Activated CD4-positive, alpha-beta T cell treated with anti-CD3 and anti-CD28 coated beads for 36 hours (primary cell): ENCODE measurements at regions of chr9 and their contacts with region 1.

Region 1: DNA sequence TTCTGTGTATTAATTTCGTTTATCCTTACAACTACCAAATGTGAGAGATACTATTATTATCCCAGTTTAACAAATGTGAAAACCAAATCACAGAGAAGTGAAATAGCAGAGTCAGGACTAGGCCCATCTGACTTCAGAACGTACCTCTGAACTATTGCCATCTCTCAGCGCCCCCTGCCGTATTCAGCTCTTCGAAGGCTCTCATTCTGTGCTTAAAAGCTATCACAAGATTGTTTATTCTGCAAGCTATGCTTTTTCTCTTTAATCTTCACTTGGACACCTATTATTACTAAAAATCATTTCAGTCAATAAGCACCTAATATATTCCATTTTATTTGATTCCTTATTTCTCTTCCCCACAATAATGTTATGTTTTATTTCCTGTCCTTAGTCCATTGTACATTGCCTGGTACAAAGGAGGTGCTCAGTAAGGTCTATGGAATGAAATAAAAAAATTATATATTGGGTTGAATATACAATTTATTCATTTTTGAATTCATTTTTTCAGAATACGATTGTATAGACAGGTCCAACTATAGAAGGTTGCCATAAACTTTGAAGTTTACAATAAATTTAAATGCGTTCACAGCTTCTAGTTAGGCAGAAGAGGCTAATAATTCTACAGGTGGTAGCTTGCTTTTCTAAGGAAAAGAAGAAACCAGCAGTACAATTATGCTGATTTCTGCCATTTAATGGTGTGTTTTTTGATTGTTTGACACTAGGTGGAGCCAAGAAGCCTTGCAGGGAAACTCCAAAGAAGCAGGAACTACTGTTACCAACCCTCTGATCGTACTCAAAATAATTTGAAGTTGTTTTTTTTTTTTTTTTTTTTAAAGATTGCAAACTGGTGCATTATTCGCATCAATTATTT is 202.2 kb upstream of the DMRTA1 start:
- DNase-seq: peak; percentile 53
- ATAC-seq: peak; percentile 36
- H3K4me3 Mint-ChIP-seq: no peak overlapping the region
- H3K27ac Mint-ChIP-seq: no peak overlapping the region
- H3K4me1 Mint-ChIP-seq: peaks cover 22% of the 10 kb centered on the region
- H3K27me3 Mint-ChIP-seq: peaks cover 28% of the 10 kb centered on the region

Region 2: GRCh38 chr9:21965401-21965951 is 278.9 kb before region 1 on chr9:
- CTCF ChIA-PET with region 1: no interaction called
- POLR2A ChIA-PET with region 1: no interaction called
- intact Hi-C with region 1: loop called in 1 of 2 experiments (anchors 5 kb)
- DNase-seq: peak; percentile 75
- ATAC-seq: peak; percentile 84
- H3K4me3 Mint-ChIP-seq: peak overlapping the region; percentile 53
- H3K27ac Mint-ChIP-seq: peak overlapping the region; percentile 5
- H3K4me1 Mint-ChIP-seq: peaks cover 24% of the 10 kb centered on the region
- H3K27me3 Mint-ChIP-seq: peaks cover 85% of the 10 kb centered on the region

Region 3: GRCh38 chr9:22105005-22105722 is 139.2 kb before region 1 on chr9:
- CTCF ChIA-PET with region 1: no interaction called
- POLR2A ChIA-PET with region 1: no interaction called
- intact Hi-C with region 1: loop called in 1 of 2 experiments (anchors 5 kb)
- DNase-seq: peak; percentile 31
- ATAC-seq: peak; percentile 96
- H3K4me3 Mint-ChIP-seq: no peak overlapping the region
- H3K27ac Mint-ChIP-seq: no peak overlapping the region
- H3K4me1 Mint-ChIP-seq: peaks cover 12% of the 10 kb centered on the region
- H3K27me3 Mint-ChIP-seq: peaks cover 14% of the 10 kb centered on the region

Region 4: DNA sequence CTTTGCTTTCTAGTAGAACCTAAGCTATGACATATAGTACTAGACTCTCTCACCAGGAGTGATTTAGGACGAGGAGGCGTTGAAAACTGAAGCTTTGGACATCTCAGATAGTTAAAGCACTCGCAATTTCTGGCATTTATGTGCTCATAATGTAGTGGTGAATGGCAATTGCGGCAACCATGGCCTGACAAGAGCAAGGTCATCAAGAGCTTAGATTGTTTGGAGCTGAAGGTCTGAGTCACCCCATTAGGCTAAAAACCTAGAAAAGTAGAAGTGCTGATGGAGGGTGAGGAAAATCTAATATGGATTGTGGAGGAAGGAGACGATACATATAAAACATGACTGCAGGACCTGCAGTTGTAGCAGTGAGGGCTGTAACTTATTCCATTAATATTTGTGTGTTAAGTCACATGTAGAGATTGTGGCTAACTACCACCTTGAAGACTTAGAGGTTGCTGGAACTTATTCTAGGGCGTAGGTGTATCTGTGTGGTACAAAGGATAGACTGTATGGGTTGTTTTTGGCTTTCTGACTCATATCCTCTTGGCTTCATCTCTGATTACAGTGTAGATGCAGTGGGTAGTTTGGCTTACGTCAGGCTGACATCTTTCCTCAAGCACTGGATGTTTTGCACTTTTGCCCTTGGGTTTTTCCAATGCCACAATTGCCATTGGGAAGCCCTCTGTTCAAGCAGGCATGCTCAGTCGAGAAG is 96.4 kb before region 1 on chr9:
- CTCF ChIA-PET with region 1: interaction called, 6 read pairs
- POLR2A ChIA-PET with region 1: no interaction called
- intact Hi-C with region 1: loop called in 1 of 2 experiments (anchors 5 kb)
- DNase-seq: peak; percentile 18
- ATAC-seq: peak; percentile 97
- H3K4me3 Mint-ChIP-seq: no peak overlapping the region
- H3K27ac Mint-ChIP-seq: no peak overlapping the region
- H3K4me1 Mint-ChIP-seq: peaks cover 17% of the 10 kb centered on the region
- H3K27me3 Mint-ChIP-seq: peaks cover 32% of the 10 kb centered on the region

Region 5: DNA sequence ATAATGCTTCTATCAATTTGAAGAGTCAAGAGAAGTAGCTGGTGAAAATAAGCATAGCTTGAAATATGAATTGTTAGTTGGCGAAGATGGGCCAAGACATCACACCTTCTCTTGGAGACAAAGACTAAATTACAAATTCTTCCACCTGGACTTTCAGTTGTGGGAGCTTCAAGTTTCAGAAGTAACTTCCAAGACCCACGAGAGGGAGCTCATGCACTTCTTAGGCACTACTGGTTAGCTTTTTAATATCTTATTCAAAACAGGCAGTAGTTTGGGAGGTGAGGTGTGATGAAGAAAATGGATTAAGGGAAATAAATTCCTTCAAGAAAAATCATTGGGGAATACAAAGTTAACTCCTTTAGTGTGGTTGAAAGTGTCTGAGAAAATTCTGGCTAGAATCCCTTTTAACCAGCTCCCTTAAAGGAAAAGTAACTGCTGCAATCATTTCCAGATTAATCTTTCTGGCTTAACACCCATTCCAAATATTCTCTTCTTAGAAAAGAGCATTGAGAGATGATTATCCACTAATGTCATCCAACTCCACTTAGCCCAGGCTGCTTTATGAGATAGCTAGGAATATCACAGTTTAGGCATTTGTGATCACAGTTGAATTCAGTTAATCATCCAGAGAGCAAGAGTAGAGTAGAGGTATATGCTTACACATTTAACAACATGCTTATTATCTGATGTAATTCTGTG is 62.8 kb after region 1 on chr9:
- CTCF ChIA-PET with region 1: no interaction called
- POLR2A ChIA-PET with region 1: no interaction called
- intact Hi-C with region 1: no loop called
- DNase-seq: peak; percentile 11
- ATAC-seq: no peak
- H3K4me3 Mint-ChIP-seq: no peak overlapping the region
- H3K27ac Mint-ChIP-seq: no peak overlapping the region
- H3K4me1 Mint-ChIP-seq: no peaks in the 10 kb centered on the region
- H3K27me3 Mint-ChIP-seq: peaks cover 7% of the 10 kb centered on the region

Region 6: GRCh38 chr9:22452415-22453010 is 208.1 kb after region 1 on chr9:
- CTCF ChIA-PET with region 1: interaction called, 6 read pairs
- POLR2A ChIA-PET with region 1: no interaction called
- intact Hi-C with region 1: loop called (anchors 1 kb)
- DNase-seq: peak; percentile 68
- ATAC-seq: no peak
- H3K4me3 Mint-ChIP-seq: no peak overlapping the region
- H3K27ac Mint-ChIP-seq: no peak overlapping the region
- H3K4me1 Mint-ChIP-seq: peaks cover 3% of the 10 kb centered on the region
- H3K27me3 Mint-ChIP-seq: peaks cover 37% of the 10 kb centered on the region